SK-N-SH (cell line): ENCODE measurements at regions of chr1 and their contacts with region 1.

Region 1: GRCh38 chr1:109984456-109985275 is at the start of gene AHCYL1:
- DNase-seq: peak; percentile 99
- H3K4me3 ChIP-seq: peak within 1 kb of the TSS; percentile 91 to 94
- H3K27ac ChIP-seq: peak within 1 kb of the TSS; percentile 89
- H3K4me1 ChIP-seq: peaks cover 19 to 25% of the 10 kb centered on the region in 2 experiments; a peak in 3 of 4 replicates
- H3K27me3 ChIP-seq: no peaks in the 10 kb centered on the region
- CTCF ChIP-seq: peak; percentile 96
- EP300 ChIP-seq: no peak
- RAD21 ChIP-seq: peak; percentile 99
- polyA plus RNA-seq, gene AHCYL1: 39.7 and 49.0 TPM in 2 replicates

Region 2: GRCh38 chr1:109643385-109644230 is 341.1 kb before region 1 on chr1:
- CTCF ChIA-PET with region 1: interaction called, 26 read pairs
- POLR2A ChIA-PET with region 1: no interaction called
- DNase-seq: peak; percentile 49
- H3K4me3 ChIP-seq: no peak overlapping the region
- H3K27ac ChIP-seq: peak overlapping the region in 1 of 2 experiments; percentile 29; a peak in 1 of 4 replicates
- H3K4me1 ChIP-seq: peaks cover 0 to 41% of the 10 kb centered on the region in 2 experiments; a peak in 2 of 4 replicates
- H3K27me3 ChIP-seq: no peaks in the 10 kb centered on the region
- CTCF ChIP-seq: peak; percentile 70
- EP300 ChIP-seq: no peak
- RAD21 ChIP-seq: peak; percentile 43

Region 3: GRCh38 chr1:109762821-109763645 is 221.6 kb before region 1 on chr1:
- CTCF ChIA-PET with region 1: interaction called, 822 read pairs
- POLR2A ChIA-PET with region 1: no interaction called
- DNase-seq: peak; percentile 25
- H3K4me3 ChIP-seq: no peak overlapping the region
- H3K27ac ChIP-seq: no peak overlapping the region
- H3K4me1 ChIP-seq: peaks cover 4 to 15% of the 10 kb centered on the region in 2 experiments; a peak in 2 of 4 replicates
- H3K27me3 ChIP-seq: no peaks in the 10 kb centered on the region
- CTCF ChIP-seq: no peak
- EP300 ChIP-seq: no peak
- RAD21 ChIP-seq: no peak

Region 4: DNA sequence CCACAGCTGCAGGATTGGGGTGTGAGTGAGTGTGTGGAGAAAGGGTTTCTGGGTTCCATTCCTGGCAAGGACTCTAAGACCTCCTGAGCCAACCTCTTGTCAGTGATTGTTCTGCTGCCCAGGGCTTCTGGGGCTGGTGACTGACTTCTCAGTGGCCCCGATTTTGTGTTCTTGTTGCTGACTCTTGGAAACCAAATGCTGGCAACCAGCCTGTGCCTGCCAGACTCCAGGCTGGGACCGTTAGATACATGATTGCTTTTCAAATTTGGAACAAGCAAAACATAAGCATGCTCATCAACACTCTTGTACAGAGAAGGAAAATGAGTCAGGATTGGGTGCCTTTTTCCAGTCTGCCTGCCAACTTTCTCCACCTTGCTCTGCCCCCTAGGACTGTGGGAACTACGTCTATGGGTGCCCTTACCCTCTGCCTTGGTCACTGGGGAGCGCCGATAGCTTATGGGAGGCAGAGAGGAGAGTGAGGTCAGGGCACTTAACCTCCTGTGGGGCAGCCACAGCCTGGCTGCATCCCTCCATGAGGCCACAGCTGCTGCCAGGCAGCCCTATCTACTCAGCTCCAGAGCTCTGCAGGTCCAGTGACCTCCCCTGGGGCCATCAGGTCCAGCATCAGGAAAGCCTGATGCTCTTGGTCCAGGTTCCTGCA is 181.6 kb before region 1 on chr1:
- CTCF ChIA-PET with region 1: interaction called, 26 read pairs
- POLR2A ChIA-PET with region 1: no interaction called
- DNase-seq: peak; percentile 51
- H3K4me3 ChIP-seq: no peak overlapping the region
- H3K27ac ChIP-seq: no peak overlapping the region
- H3K4me1 ChIP-seq: peaks cover 15 to 29% of the 10 kb centered on the region in 2 experiments; a peak in 3 of 4 replicates
- H3K27me3 ChIP-seq: no peaks in the 10 kb centered on the region
- CTCF ChIP-seq: no peak
- EP300 ChIP-seq: no peak
- RAD21 ChIP-seq: no peak

Region 5: DNA sequence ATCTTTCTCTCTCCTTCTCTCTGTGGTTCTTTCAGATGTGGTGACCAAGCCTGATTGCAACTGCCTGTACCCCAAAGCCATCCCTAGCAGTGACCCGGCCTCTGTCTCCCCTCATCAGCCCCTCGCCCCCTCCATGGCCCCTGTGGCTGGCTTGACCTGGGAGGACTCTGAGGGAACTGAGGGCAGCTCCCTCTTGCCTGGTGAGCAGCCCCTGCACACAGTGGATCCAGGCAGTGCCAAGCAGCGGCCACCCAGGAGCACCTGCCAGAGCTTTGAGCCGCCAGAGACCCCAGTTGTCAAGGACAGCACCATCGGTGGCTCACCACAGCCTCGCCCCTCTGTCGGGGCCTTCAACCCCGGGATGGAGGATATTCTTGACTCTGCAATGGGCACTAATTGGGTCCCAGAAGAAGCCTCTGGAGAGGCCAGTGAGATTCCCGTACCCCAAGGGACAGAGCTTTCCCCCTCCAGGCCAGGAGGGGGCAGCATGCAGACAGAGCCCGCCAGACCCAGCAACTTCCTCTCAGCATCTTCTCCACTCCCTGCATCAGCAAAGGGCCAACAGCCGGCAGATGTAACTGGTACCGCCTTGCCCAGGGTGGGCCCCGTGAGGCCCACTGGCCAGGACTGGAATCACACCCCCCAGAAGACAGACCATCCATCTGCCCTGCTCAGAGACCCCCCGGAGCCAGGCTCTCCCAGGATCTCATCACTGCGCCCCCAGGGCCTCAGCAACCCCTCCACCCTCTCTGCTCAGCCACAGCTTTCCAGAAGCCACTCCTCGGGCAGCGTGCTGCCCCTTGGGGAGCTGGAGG is 61.3 kb before region 1 on chr1:
- CTCF ChIA-PET with region 1: interaction called, 19 read pairs
- POLR2A ChIA-PET with region 1: no interaction called
- DNase-seq: peak; percentile 52
- H3K4me3 ChIP-seq: no peak overlapping the region
- H3K27ac ChIP-seq: no peak overlapping the region
- H3K4me1 ChIP-seq: peaks cover 0 to 8% of the 10 kb centered on the region in 2 experiments; a peak in 1 of 4 replicates
- H3K27me3 ChIP-seq: no peaks in the 10 kb centered on the region
- CTCF ChIP-seq: peak; percentile 65
- EP300 ChIP-seq: no peak
- RAD21 ChIP-seq: no peak; the same call in 1 of the 2 replicates

Region 6: DNA sequence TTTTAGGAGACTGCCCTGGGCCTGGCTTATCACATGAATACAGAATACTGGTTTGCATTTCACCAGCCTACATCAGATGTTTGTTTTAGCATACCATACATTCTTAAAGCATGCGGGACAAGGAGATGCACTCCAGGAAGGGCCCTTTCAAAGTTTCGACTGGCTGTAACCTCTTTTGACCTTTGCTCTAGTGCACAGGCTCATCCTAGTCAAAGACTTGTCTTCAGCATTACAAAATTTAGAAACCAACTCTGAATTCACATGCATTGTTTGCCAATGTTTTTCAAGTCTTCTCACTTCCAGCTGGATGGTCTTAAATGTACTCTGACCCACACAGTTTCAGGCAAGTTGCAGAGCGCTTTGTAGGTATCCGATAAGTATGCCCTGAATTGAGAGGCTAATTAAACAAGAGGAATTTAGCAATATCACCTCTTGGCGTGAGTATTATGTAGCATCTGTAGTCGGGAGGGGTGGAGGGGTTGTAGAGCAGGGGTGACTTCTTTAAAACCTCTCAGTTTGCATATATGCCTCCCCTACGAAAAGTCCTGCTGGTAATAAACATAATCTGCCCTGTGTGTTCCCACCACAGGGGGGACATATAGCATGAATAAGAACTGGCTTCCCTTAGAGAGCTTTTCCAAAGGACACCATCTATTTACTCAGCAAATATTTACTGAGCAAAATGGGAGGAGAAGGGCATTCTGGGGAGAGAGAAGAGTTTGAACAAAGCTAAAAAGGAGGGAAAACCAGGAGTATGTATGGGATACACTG is 24.5 kb before region 1 on chr1:
- CTCF ChIA-PET with region 1: interaction called, 33 read pairs
- POLR2A ChIA-PET with region 1: no interaction called
- DNase-seq: no peak
- H3K4me3 ChIP-seq: no peak overlapping the region
- H3K27ac ChIP-seq: peak overlapping the region; percentile 66 to 85; a peak in 3 of 4 replicates
- H3K4me1 ChIP-seq: peaks cover 3 to 16% of the 10 kb centered on the region in 2 experiments; a peak in 2 of 4 replicates
- H3K27me3 ChIP-seq: no peaks in the 10 kb centered on the region
- CTCF ChIP-seq: peak; percentile 23; the same call in 1 of the 2 replicates
- EP300 ChIP-seq: no peak
- RAD21 ChIP-seq: no peak

Region 7: DNA sequence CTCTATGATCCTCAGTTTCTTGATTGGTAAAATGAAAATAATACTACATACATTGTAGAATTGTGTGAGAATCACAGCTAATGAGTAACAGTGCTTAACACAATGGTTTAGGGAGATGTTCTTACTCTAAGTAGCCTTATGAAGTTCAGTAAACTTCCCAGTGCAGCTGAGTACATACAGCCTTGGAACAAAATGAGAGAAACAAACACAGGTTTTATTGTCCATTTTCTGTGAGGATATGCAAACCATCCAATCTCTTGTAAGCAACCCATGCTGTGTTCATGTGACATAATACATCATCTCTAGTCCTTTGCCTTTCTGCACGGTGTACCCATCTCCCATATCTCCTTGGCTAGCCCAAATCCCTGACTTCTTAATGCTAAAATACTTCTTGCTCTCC is 35.1 kb after region 1 on chr1:
- CTCF ChIA-PET with region 1: interaction called, 11 read pairs
- POLR2A ChIA-PET with region 1: interaction called, 3 read pairs
- DNase-seq: no peak
- H3K4me3 ChIP-seq: no peak overlapping the region
- H3K27ac ChIP-seq: no peak overlapping the region; a peak in 1 of 4 replicates
- H3K4me1 ChIP-seq: peaks cover 0 to 6% of the 10 kb centered on the region in 2 experiments; a peak in 1 of 4 replicates
- H3K27me3 ChIP-seq: no peaks in the 10 kb centered on the region
- CTCF ChIP-seq: no peak
- EP300 ChIP-seq: no peak
- RAD21 ChIP-seq: no peak

Region 8: DNA sequence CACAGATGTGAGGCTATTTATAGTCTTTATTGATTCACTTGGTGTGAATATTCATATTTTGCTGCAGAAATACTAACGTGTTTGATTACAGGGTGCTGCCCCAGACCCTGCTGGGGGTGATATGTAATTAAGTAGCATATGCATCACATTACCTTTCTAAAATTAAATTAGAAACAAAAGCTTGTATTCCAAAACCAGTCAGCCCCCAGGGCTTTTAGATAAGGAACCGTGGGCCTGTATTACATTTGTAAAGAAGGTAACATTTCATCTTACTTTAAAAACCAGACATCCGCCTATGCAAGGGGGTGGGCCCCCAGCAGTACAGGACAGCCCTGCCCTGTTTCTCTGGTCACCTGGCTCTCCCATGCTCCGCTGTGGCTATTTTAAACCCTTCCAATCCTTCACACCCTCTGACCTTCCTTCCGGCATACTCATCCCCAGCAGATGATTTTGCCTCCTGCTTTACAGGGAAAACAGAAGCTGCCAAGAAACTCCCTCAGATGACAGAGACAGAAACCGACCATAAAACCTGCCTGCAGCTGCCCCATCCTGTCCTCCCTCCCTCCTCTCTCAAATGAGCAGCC is 203.5 kb after region 1 on chr1:
- CTCF ChIA-PET with region 1: no interaction called
- POLR2A ChIA-PET with region 1: no interaction called
- DNase-seq: peak; percentile 77
- H3K4me3 ChIP-seq: no peak overlapping the region
- H3K27ac ChIP-seq: peak overlapping the region in 1 of 2 experiments; percentile 95; a peak in 2 of 4 replicates
- H3K4me1 ChIP-seq: peaks cover 4 to 55% of the 10 kb centered on the region in 2 experiments; a peak in 2 of 4 replicates
- H3K27me3 ChIP-seq: no peaks in the 10 kb centered on the region
- CTCF ChIP-seq: no peak
- EP300 ChIP-seq: peak in 1 of 2 experiments; percentile 93; a peak in 2 of 4 replicates
- RAD21 ChIP-seq: no peak

Region 9: DNA sequence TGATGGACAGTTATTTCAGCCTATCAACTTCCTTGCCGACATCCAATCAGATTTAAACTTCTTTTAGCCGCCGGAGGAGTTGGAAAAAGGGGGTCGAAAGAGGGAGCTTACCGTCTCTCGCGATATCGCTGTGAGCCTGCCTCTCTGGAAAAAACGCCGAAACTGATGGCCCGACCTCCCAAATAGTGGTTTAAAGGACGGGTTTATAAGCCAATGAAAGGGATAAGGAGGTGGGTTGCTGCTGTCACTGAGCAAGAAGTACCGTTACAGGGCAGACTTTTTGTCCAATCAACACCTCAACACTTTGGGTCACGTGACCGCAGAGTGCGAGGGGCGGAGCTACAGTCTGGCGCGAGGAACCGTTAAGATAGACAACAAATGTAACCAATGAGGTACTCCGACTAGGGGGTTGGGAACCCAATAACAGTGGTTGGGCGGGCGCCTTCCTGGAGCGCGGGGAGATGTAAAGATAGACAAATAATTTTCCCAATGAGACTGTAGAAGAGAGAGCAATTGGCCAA is 354.3 kb after region 1 on chr1 and contains the start of gene RBM15:
- CTCF ChIA-PET with region 1: no interaction called
- POLR2A ChIA-PET with region 1: no interaction called
- DNase-seq: peak; percentile 94
- H3K4me3 ChIP-seq: peak within 1 kb of the TSS; percentile 94 to 99
- H3K27ac ChIP-seq: peak within 1 kb of the TSS; percentile 98 to 99
- H3K4me1 ChIP-seq: peaks cover 29 to 44% of the 10 kb centered on the region in 2 experiments
- H3K27me3 ChIP-seq: no peaks in the 10 kb centered on the region
- CTCF ChIP-seq: no peak
- EP300 ChIP-seq: no peak; a peak in 1 of 4 replicates
- RAD21 ChIP-seq: no peak
- polyA plus RNA-seq, gene RBM15: 3.8 and 4.7 TPM in 2 replicates